Left cardiac atrium (tissue), 4 donors: ENCODE measurements at regions of chr3 and their contacts with region 1.

Region 1: DNA sequence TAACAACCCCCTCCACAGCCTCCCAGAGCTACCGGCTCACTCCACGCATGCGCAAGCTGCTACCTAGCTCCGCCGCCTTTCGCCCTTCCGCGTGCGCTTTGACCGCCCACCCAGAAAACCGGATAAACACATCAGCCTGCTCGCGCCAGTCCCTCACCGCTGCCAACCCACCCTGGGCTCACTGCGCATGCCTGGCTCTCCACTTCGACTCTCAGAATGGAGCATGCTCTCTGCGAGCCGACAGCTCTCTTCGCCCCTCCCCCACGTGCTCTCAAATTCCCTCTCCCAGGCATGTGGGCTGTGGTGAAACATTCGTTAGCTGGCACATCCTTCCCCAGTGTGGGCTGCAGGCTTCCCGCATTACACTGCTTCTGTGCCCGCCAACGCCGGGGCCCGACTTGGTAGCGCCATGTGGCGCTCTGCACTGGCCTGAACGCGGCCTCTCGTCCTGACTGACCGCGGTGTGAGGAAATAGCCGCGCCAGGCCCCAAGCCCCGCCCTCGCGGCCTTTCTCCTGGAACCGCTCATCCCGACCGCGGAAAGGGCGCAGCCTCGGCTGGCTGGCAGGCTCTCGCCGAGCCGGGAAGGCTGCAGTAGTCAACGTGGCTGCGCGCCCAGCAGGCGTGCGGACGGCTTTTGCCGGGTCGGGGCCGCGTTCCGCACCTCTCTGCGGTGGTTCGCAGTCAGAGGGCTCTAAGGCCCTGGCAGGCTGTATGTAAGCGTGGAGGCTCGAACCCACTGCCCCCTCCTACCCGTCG is 445 bp upstream of the MSL2 start:
- DNase-seq: peak; percentile 99
- ATAC-seq: peak; percentile 87 to 92

Region 2: DNA sequence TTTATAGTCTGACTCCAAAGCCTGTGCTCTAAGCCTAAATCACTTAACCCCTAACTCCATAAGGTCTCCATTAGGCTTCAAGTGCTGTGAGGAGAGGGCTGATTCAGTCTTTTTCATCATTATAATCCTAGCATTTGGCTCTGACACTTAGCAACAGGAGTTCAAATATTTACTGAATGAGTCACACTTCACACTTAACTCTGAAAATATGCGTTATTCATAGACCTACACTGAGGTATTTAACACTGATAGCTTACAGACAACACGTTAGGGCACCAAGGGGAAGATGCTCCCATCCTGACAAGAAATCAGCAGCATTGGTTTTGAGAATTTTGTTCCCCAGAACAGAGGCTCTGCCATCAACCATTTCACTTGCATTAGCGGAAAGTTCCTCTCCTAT is 54.0 kb before region 1 on chr3:
- intact Hi-C with region 1: loop called in 1 of 2 experiments (anchors 10 kb)
- DNase-seq: no peak
- ATAC-seq: peak; percentile 73 to 89

Region 3: DNA sequence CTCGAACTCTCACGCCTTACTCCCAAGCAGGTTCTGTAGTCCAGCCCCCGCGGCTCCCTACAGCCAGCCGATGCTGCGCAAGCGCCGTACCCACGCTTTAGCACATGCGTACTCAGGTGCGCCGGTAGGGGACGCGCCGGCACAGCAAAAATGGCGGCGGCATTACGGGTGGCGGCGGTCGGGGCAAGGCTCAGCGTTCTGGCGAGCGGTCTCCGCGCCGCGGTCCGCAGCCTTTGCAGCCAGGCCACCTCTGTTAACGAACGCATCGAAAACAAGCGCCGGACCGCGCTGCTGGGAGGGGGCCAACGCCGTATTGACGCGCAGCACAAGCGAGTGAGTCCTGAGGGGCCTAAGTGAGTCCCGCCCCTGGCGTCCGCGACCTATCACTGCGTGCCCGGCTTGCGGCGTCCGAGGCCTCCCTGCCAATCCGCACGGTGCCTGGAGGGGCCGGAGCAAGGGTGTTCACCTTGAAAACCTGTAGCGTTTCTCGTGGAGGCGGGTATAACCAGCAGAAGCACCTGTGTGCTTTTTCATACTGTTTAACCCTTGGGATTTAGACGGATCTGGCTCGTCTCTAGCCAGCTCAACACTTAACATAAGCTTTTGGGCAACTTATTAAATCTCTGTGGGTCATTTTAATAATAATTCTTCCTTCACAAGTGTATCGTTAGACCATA is 53.8 kb after region 1 on chr3 and contains the start of gene PCCB:
- intact Hi-C with region 1: loop called in 1 of 2 experiments (anchors 1 kb)
- DNase-seq: peak; percentile 97
- ATAC-seq: peak; percentile 99
- total RNA-seq, gene PCCB: 67.7 to 70.8 TPM